Natural killer cell (primary cell): ENCODE measurements at regions of chr1 and their contacts with region 1.

Region 1: GRCh38 chr1:172895050-172895460 is 155.7 kb downstream of the TNFSF18 start:
- DNase-seq: peak in 1 of 2 donors; percentile 70
- ATAC-seq: peak; percentile 85 to 97 (median 94)
- H3K4me3 ChIP-seq: peak overlapping the region; percentile 24
- H3K4me3 Mint-ChIP-seq: peak overlapping the region; percentile 79
- H3K27ac ChIP-seq: peak overlapping the region; percentile 62
- H3K27ac Mint-ChIP-seq: peak overlapping the region; percentile 56 to 80
- H3K4me1 ChIP-seq: peaks cover 7% of the 10 kb centered on the region
- H3K4me1 Mint-ChIP-seq: peaks cover 17% of the 10 kb centered on the region in 2 donors
- H3K27me3 ChIP-seq: no peaks in the 10 kb centered on the region
- H3K27me3 Mint-ChIP-seq: peaks cover 0 to 2% of the 10 kb centered on the region in 2 donors
- CTCF ChIP-seq: no peak

Region 2: GRCh38 chr1:172818841-172819527 is 76.1 kb before region 1 on chr1:
- intact Hi-C with region 1: loop called (anchors 5 kb)
- DNase-seq: peak; percentile 33 to 36
- ATAC-seq: peak; percentile 81 to 85 (median 84)
- H3K4me3 ChIP-seq: no peak overlapping the region
- H3K4me3 Mint-ChIP-seq: peak overlapping the region; percentile 78
- H3K27ac ChIP-seq: peak overlapping the region; percentile 78
- H3K27ac Mint-ChIP-seq: peak overlapping the region; percentile 70 to 85
- H3K4me1 ChIP-seq: peaks cover 25% of the 10 kb centered on the region
- H3K4me1 Mint-ChIP-seq: peaks cover 36 to 53% of the 10 kb centered on the region in 2 donors
- H3K27me3 ChIP-seq: no peaks in the 10 kb centered on the region
- H3K27me3 Mint-ChIP-seq: no peaks in the 10 kb centered on the region
- CTCF ChIP-seq: no peak

Region 3: GRCh38 chr1:172870901-172871606 is 24.0 kb before region 1 on chr1:
- intact Hi-C with region 1: no loop called
- DNase-seq: no peak
- ATAC-seq: peak in 2 of 3 donors; percentile 47 to 53
- H3K4me3 ChIP-seq: no peak overlapping the region
- H3K4me3 Mint-ChIP-seq: no peak overlapping the region
- H3K27ac ChIP-seq: no peak overlapping the region
- H3K27ac Mint-ChIP-seq: no peak overlapping the region
- H3K4me1 ChIP-seq: no peaks in the 10 kb centered on the region
- H3K4me1 Mint-ChIP-seq: peaks cover 0 to 5% of the 10 kb centered on the region in 2 donors
- H3K27me3 ChIP-seq: no peaks in the 10 kb centered on the region
- H3K27me3 Mint-ChIP-seq: no peaks in the 10 kb centered on the region
- CTCF ChIP-seq: no peak